ENCODE measurements at regions of chr20 and their contacts with region 1.

Region 1: DNA sequence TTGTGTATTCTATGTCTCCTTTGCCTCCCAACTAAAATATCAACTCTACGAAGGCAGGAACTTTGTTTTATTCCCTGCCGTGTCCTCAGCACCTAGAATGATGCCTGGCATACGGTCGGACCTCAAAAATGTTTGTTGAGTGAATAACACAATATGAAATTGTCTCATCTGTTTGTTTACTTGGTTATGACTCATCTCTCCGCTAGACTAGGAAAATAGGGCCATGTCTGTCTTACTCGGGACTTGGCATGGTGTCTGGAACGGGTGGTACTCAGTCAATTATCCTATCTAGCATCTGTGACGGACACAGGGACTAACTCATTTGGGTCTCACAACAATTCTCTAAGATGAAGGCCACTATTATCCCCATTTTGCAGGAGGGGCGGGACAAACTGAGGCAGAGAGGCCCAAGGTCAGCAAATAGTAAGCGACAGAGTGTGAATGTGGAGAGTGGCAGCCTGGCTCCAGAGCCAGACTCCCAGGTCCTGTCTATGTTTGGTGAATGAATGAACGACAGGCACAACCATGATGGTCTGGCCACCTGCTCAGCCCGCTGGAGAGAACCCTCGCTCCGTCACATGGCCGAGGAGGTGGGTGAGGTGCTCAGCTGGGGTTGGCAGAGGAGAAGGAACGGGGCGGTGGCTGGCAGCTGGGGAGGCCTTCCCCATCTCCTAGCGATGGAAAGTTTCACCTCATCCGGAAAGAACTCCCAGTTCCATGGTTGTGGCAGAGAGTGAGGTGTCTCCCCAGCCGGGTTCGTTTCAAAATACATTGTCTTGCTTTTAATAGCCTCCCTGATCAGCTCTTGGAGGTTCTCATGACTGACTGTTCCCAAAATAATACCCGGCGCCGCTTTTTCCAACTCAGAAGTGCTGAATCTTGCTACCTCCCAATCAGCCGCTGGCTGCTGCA is 27.6 kb upstream of the NFATC2 start:
- DNase-seq: peak in 1 of 2 donors; percentile 79
- H3K4me3 ChIP-seq: peak overlapping the region in 1 of 2 donors; percentile 52
- H3K27ac ChIP-seq: peak overlapping the region; percentile 64 to 80
- H3K4me1 ChIP-seq: peaks cover 7 to 14% of the 10 kb centered on the region in 2 donors
- H3K27me3 ChIP-seq: no peaks in the 10 kb centered on the region
- CTCF ChIP-seq: no peak

Region 2: DNA sequence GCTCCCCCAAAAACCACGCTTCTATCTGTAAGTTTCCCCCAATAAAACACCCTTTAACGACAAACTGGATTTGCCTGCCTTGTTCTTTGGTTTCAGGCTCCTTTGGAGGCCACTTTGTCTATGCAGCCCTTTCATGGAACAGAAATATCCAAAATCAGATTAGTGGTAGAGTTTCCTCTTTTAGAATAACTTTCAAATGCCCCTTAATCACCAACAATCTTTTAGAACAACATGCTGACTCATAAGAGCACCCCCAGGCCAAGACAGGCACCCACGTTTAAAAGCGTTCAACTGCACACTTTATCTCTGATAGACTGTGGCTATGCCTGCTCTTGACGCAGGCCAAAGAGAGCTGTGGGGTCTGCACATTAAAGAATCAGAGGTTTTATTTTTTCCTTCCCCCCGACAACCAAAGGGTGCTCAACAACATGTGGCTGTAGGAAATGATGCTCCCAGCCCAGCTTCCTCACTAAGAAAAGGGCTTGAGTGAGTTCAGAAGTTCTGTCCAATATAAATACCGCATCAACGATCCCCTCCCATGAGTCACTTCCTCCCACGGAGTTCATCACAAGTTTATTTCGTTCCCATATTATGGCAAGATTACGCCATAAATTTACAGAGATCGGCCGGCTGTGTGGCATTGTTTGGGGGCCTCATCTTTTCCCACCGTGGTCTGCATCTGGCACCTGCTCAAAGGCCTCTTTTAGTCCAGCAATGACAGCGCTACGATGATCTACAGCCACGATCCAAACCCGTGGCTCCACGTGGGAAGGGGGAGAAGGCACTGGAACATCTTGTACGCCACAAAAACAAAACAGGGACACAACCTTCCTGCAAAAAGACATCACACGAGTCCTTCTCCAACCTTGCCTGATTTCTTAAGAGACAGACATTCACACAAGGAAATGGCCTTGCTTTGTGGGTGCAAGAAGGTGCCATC is 61.2 kb after region 1 on chr20:
- intact Hi-C with region 1: loop called (anchors 5 kb)
- DNase-seq: peak; percentile 25 to 86
- H3K4me3 ChIP-seq: peak overlapping the region; percentile 8 to 25
- H3K27ac ChIP-seq: peak overlapping the region; percentile 78 to 90
- H3K4me1 ChIP-seq: peaks cover 15 to 21% of the 10 kb centered on the region in 2 donors
- H3K27me3 ChIP-seq: no peaks in the 10 kb centered on the region
- CTCF ChIP-seq: no peak

Measured in ascending aorta (tissue), 2 donors.